ENCODE measurements at regions of chr9 and their contacts with region 1.

Region 1: GRCh38 chr9:105881654-105882349 is 187.5 kb downstream of the TMEM38B start:
- DNase-seq: peak; percentile 43
- ATAC-seq: peak; percentile 44 to 50

Region 2: DNA sequence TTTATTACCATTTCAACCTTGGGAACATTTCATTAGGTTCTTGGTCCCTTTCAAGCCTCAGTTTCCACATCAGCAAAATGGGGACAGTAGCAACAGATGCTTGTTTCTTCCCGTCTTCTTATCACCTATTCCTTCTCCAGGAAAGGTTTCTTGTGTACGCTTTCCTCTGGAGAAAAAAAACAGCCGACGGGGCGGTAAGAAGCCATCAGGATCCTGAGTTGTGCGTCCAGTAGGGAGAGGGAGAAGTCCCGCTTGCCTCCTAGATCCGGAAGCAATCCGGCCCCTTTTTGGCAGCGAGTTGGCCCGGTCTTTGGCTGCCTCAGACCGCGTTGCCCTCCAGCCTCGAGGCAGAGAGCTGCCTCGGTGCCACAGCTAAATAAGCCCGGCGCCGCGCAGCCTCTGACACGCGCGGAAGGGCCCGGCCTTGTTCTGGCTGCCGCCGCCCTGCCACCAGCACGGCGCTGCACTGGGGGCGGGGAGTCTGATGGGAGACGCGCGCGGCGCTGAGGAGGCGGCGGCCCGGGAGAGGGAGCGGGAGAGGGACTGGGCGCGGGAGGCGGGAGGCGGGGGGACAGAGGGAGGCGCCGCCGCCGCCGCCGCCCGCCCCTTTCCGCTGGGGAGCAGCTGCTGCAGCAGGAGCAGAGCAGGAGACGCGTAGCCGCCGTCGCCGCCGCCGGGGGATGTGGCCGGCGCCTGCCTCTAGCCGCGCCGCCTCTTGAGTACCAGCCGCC is 637.6 kb before region 1 on chr9 and contains the start of gene SLC44A1:
- intact Hi-C with region 1: no loop called
- DNase-seq: peak; percentile 98
- ATAC-seq: peak; percentile 99
- total RNA-seq, gene SLC44A1: 16.9 to 17.3 TPM

Region 3: GRCh38 chr9:105608721-105609598 is 272.8 kb before region 1 on chr9:
- intact Hi-C with region 1: loop called in 1 of 2 experiments (anchors 5 kb)
- DNase-seq: no peak
- ATAC-seq: no peak

Measured in left cardiac atrium (tissue), 4 donors.